ENCODE measurements at regions of chr1 and their contacts with region 1.

Region 1: DNA sequence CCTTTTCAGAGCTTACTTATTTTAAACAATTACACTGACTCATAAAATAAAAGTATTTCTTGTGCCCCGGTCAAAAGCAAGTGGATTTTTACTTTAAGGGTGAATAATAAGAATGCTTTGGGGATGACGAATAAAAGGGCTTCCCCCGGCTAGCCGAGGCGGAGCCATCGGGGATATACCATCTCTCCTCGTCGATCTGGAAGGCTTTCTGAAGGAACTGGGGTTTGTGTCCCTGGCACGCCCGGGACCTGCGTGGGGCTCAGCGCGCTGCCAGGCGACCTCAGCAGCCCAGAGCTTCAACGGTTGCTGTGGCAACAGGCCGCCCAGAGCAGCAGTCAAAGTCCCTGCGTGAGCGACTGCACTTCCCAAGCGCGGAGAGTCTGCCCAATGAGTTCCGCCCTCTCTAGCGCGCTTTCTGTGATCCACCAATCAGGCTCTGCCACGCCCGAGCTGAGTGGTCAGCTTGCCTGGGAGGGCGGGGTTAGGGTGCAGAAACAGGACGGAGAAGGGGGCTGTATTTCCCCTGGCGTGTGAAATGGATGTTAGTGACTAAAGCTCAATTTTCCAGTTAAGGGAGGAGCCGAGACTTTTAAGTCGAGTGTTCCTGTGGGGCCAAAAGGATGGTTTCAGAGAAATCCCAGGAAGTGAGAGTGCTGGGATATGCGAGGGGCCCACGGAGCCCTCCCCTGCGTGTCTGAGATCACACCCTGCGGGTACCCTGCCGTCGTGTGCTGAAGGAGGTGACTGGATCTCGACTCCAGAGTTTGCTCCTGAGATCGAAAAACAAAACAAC is 33.0 kb upstream of the MGST3 start:
- DNase-seq: peak; percentile 77 to 95 (median 89)
- ATAC-seq: peak; percentile 94
- H3K4me3 ChIP-seq: peak overlapping the region; percentile 60 to 63
- H3K4me3 Mint-ChIP-seq: peak overlapping the region; percentile 89
- H3K27ac ChIP-seq: peak overlapping the region; percentile 24 to 49
- H3K27ac Mint-ChIP-seq: peak overlapping the region; percentile 50
- H3K4me1 ChIP-seq: peaks cover 12% of the 10 kb centered on the region
- H3K4me1 Mint-ChIP-seq: peaks cover 19% of the 10 kb centered on the region
- H3K27me3 ChIP-seq: peaks cover 0 to 3% of the 10 kb centered on the region in 2 experiments
- H3K27me3 Mint-ChIP-seq: peaks cover 31% of the 10 kb centered on the region
- CTCF ChIP-seq: no peak

Region 2: GRCh38 chr1:165257969-165258459 is 340.1 kb before region 1 on chr1:
- CTCF ChIA-PET with region 1: no interaction called
- POLR2A ChIA-PET with region 1: no interaction called
- intact Hi-C with region 1: loop called in 1 of 2 experiments (anchors 5 kb)
- DNase-seq: peak in 4 of 9 experiments; percentile 9 to 14 (median 12)
- ATAC-seq: no peak
- H3K4me3 ChIP-seq: no peak overlapping the region
- H3K4me3 Mint-ChIP-seq: no peak overlapping the region
- H3K27ac ChIP-seq: no peak overlapping the region
- H3K27ac Mint-ChIP-seq: no peak overlapping the region
- H3K4me1 ChIP-seq: no peaks in the 10 kb centered on the region
- H3K4me1 Mint-ChIP-seq: no peaks in the 10 kb centered on the region
- H3K27me3 ChIP-seq: no peaks in the 10 kb centered on the region
- H3K27me3 Mint-ChIP-seq: peaks cover 14% of the 10 kb centered on the region
- CTCF ChIP-seq: no peak

Region 3: GRCh38 chr1:165392634-165393571 is 205.2 kb before region 1 on chr1:
- CTCF ChIA-PET with region 1: interaction called, 243 read pairs
- POLR2A ChIA-PET with region 1: interaction called, 16 read pairs
- intact Hi-C with region 1: loop called (anchors 1 kb)
- DNase-seq: peak; percentile 81 to 95 (median 90)
- ATAC-seq: peak; percentile 99
- H3K4me3 ChIP-seq: no peak overlapping the region
- H3K4me3 Mint-ChIP-seq: peak overlapping the region; percentile 43
- H3K27ac ChIP-seq: no peak overlapping the region
- H3K27ac Mint-ChIP-seq: peak overlapping the region; percentile 64
- H3K4me1 ChIP-seq: peaks cover 15% of the 10 kb centered on the region
- H3K4me1 Mint-ChIP-seq: peaks cover 16% of the 10 kb centered on the region
- H3K27me3 ChIP-seq: peaks cover 8 to 13% of the 10 kb centered on the region in 2 experiments
- H3K27me3 Mint-ChIP-seq: peaks cover 62% of the 10 kb centered on the region
- CTCF ChIP-seq: peak; percentile 92

Region 4: GRCh38 chr1:165496501-165496900 is 101.6 kb before region 1 on chr1:
- CTCF ChIA-PET with region 1: no interaction called
- POLR2A ChIA-PET with region 1: no interaction called
- intact Hi-C with region 1: no loop called
- DNase-seq: no peak
- ATAC-seq: no peak
- H3K4me3 ChIP-seq: no peak overlapping the region
- H3K4me3 Mint-ChIP-seq: no peak overlapping the region
- H3K27ac ChIP-seq: no peak overlapping the region
- H3K27ac Mint-ChIP-seq: no peak overlapping the region
- H3K4me1 ChIP-seq: no peaks in the 10 kb centered on the region
- H3K4me1 Mint-ChIP-seq: no peaks in the 10 kb centered on the region
- H3K27me3 ChIP-seq: no peaks in the 10 kb centered on the region
- H3K27me3 Mint-ChIP-seq: peaks cover 15% of the 10 kb centered on the region
- CTCF ChIP-seq: no peak

Region 5: DNA sequence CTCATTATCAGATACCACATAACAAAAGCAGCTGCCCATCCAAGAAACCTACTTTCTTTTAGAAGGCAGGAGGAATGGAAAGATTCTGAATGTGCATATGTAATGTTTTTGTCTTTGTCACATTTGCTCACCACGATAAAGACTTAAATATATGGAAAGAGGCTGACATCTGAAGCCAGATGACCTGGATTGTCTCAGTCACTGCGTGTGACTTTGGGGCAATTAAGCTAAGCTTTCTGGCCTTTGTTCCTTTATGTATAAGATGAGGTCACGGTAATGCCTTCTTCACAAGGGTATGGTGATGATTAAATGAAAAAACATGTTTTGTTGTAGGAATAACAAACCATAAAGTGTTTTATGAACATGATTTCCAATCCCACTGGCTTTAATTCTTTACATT is 11.6 kb before region 1 on chr1:
- CTCF ChIA-PET with region 1: interaction called, 23 read pairs
- POLR2A ChIA-PET with region 1: no interaction called
- intact Hi-C with region 1: no loop called
- DNase-seq: no peak
- ATAC-seq: no peak
- H3K4me3 ChIP-seq: no peak overlapping the region
- H3K4me3 Mint-ChIP-seq: no peak overlapping the region
- H3K27ac ChIP-seq: no peak overlapping the region
- H3K27ac Mint-ChIP-seq: no peak overlapping the region
- H3K4me1 ChIP-seq: no peaks in the 10 kb centered on the region
- H3K4me1 Mint-ChIP-seq: no peaks in the 10 kb centered on the region
- H3K27me3 ChIP-seq: no peaks in the 10 kb centered on the region
- H3K27me3 Mint-ChIP-seq: peaks cover 44% of the 10 kb centered on the region
- CTCF ChIP-seq: no peak

Region 6: GRCh38 chr1:165793951-165794350 is 195.9 kb after region 1 on chr1:
- CTCF ChIA-PET with region 1: no interaction called
- POLR2A ChIA-PET with region 1: no interaction called
- intact Hi-C with region 1: no loop called
- DNase-seq: no peak
- ATAC-seq: no peak
- H3K4me3 ChIP-seq: no peak overlapping the region
- H3K4me3 Mint-ChIP-seq: no peak overlapping the region
- H3K27ac ChIP-seq: no peak overlapping the region
- H3K27ac Mint-ChIP-seq: no peak overlapping the region
- H3K4me1 ChIP-seq: no peaks in the 10 kb centered on the region
- H3K4me1 Mint-ChIP-seq: no peaks in the 10 kb centered on the region
- H3K27me3 ChIP-seq: no peaks in the 10 kb centered on the region
- H3K27me3 Mint-ChIP-seq: peaks cover 21% of the 10 kb centered on the region
- CTCF ChIP-seq: no peak

Region 7: GRCh38 chr1:165827268-165828102 is 229.4 kb after region 1 on chr1 and contains the start of gene UCK2:
- CTCF ChIA-PET with region 1: no interaction called
- POLR2A ChIA-PET with region 1: no interaction called
- intact Hi-C with region 1: loop called in 1 of 2 experiments (anchors 5 kb)
- DNase-seq: peak; percentile 4 to 74 (median 47)
- ATAC-seq: peak; percentile 75
- H3K4me3 ChIP-seq: peak within 1 kb of the TSS; percentile 72 to 81
- H3K4me3 Mint-ChIP-seq: peak within 1 kb of the TSS; percentile 89
- H3K27ac ChIP-seq: peak within 1 kb of the TSS; percentile 33 to 43
- H3K27ac Mint-ChIP-seq: peak within 1 kb of the TSS; percentile 81
- H3K4me1 ChIP-seq: peaks cover 11% of the 10 kb centered on the region
- H3K4me1 Mint-ChIP-seq: peaks cover 21% of the 10 kb centered on the region
- H3K27me3 ChIP-seq: no peaks in the 10 kb centered on the region
- H3K27me3 Mint-ChIP-seq: peaks cover 2% of the 10 kb centered on the region
- CTCF ChIP-seq: no peak
- total RNA-seq, gene UCK2: 1.1 to 1.7 TPM

Region 8: DNA sequence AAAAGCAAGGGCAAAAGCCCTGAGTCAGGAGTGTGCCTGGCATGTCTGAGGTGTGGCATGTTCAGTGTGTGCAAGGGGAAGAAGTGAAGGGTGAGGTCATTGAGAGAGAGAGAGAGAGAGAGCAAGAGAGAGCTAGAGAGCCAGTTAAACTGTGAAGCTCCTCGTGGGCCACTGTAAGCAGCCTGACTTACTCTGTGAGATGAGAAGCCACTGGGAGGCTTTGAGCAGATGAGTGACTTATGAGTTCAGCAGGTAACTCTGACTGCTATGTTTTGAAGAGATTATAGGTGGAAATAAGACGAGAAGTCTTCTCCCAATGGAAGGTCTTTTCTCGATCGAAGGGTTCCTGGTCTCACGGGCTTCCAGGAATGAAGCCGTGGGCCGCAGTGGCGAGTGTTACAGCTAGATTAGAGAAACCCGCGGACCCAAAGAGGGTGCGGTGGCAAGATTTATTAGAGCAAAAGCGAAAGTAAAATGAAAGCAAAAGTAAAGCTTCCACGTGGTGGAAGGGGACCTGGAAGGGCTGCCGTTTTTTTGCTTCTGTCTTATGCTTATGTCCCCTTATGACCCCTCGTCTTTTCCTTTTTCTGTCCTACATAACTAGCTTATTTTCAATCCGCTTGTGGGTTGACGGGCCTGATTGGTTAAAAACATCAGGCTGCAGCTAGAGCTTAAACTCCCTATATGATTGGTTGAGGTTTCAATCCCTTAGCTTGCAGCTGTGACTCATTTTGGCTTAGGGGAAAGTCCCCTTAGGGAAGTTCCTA is 891.8 kb after region 1 on chr1:
- CTCF ChIA-PET with region 1: no interaction called
- POLR2A ChIA-PET with region 1: no interaction called
- intact Hi-C with region 1: loop called in 1 of 2 experiments (anchors 10 kb)
- DNase-seq: peak; percentile 7 to 87 (median 44)
- ATAC-seq: peak; percentile 86
- H3K4me3 ChIP-seq: peak overlapping the region; percentile 67 to 95
- H3K4me3 Mint-ChIP-seq: no peak overlapping the region
- H3K27ac ChIP-seq: peak overlapping the region; percentile 89 to 95
- H3K27ac Mint-ChIP-seq: no peak overlapping the region
- H3K4me1 ChIP-seq: peaks cover 23% of the 10 kb centered on the region
- H3K4me1 Mint-ChIP-seq: peaks cover 16% of the 10 kb centered on the region
- H3K27me3 ChIP-seq: no peaks in the 10 kb centered on the region
- H3K27me3 Mint-ChIP-seq: no peaks in the 10 kb centered on the region
- CTCF ChIP-seq: no peak